Activated naive CD8-positive, alpha-beta T cell treated with anti-CD3 and anti-CD28 coated beads, Interleukin-2, amount 10 ng/mL, durations not matched to agents 7 days and 5 days (primary cell): ENCODE measurements at regions of chr6 and their contacts with region 1.

Region 1: DNA sequence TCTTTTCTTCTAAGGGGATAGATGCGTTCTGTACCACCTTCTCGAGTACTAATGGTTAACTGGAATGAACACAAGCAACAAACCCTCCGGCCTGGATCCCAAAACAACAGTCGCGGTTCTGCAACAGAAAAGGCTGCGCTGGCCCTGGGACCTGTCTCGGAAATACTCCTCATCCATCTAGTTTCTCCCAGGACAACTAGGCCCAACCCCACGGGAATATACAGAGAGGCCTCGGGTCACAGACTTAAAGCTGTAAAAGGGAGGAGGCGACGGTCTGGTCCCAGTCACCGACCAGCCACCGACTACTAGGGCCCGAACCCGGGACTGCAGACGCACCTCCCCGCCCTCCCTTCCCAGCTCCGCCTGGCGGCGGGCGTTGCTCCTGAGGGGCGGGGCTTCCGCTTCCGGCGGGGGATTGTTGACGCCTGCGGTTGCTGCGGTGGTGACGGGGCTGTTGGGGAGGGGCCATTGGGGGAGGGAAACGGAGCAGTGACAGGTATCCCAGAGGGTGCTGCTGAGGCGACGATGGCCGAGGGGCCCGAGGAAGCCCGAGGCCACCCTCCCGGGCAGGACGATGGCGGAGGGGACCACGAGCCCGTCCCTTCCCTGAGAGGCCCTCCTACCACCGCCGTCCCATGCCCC is at the start of gene FAM8A1:
- DNase-seq: peak; percentile 97
- ATAC-seq: peak; percentile 88
- H3K4me3 Mint-ChIP-seq: peak within 1 kb of the TSS; percentile 96
- H3K27ac Mint-ChIP-seq: peak within 1 kb of the TSS; percentile 95
- H3K4me1 Mint-ChIP-seq: peaks cover 24% of the 10 kb centered on the region
- H3K27me3 Mint-ChIP-seq: no peaks in the 10 kb centered on the region
- total RNA-seq, gene FAM8A1: 14.2 to 14.9 TPM

Region 2: DNA sequence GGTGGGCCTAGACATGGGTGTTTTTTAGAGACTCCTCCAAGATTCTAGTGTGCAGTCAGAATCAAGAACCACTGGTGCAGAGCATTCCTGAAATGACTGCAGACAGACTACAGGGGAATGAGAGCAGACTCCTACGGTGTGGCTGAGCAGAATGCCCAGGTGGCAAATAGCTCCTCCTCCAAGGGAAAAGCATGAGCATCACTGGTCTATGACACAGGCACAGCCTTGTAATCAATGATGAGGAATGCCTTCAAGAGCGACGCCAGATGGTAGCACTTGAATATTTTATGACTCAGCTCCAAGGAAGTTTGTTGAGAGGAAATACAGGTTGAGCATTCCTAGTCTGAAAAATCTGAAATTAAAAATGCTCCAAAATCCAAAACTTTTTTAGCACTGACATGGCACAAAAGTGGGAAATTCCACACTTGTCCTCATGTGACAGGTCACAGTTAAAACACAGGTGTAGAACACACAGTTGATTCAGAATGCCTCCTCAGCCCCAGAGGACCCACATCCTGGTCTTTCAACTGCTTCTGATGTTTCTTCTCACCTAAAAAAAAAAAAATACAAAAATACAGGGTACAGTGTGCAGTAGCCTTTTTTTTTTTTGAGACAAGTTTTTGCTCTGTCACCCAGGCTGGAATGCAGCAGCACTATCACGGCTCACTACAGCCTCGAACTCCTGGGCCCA is 10.5 kb before region 1 on chr6:
- POLR2A ChIA-PET with region 1: interaction called, 10 read pairs
- DNase-seq: no peak
- ATAC-seq: peak; percentile 88
- H3K4me3 Mint-ChIP-seq: no peak overlapping the region
- H3K27ac Mint-ChIP-seq: peak overlapping the region; percentile 32
- H3K4me1 Mint-ChIP-seq: peaks cover 19% of the 10 kb centered on the region
- H3K27me3 Mint-ChIP-seq: no peaks in the 10 kb centered on the region

Region 3: GRCh38 chr6:17665132-17665531 is 65.1 kb after region 1 on chr6:
- POLR2A ChIA-PET with region 1: no interaction called
- DNase-seq: no peak
- ATAC-seq: no peak
- H3K4me3 Mint-ChIP-seq: peak overlapping the region; percentile 51
- H3K27ac Mint-ChIP-seq: peak overlapping the region; percentile 78
- H3K4me1 Mint-ChIP-seq: peaks cover 31% of the 10 kb centered on the region
- H3K27me3 Mint-ChIP-seq: no peaks in the 10 kb centered on the region

Region 4: DNA sequence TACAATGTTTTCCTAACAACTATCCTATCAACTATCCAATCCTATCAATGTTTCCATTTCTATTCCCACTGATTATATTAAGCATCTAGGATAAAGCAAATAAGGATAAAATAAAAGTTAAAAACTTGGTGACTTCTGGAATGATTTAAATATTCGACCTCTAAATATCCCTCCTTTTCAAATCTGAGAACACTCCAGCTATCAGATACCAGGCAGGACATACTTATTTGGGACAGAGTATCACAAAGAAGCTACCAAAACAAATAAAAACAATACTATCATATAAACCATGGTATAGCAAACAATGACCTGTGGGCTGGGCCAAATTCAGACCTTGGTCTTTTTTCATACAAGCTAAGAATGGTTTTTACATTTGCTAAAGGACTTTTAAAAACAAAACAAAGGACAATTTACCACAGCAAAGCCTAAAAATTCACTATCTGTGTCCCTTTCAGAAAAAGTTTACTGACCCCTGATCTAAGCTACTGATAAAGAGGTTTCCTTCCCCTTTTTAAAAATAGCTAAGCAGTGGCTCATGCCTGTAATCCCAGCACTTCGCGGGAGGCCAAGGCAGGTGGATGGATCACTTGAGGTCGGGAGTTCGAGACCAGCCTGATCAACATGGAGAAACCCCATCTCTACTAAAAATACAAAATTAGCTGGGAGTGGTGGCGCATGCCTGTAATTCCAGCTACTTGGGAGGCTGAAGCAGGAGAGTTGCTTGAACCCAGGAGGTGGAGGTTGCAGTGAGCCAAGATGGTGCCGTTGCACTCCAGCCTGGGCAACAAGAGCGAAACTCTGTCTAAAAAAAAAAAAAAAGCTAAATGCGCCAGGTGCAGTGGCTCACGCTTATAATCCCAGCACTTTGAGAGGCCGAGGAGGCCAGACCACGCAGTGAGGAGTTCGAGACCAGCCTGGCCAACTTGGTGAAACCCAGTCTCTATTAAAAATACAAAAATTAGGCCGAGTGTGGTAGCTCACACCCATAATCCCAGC is 100.7 kb after region 1 on chr6:
- POLR2A ChIA-PET with region 1: interaction called, 39 read pairs
- DNase-seq: no peak
- ATAC-seq: no peak
- H3K4me3 Mint-ChIP-seq: no peak overlapping the region
- H3K27ac Mint-ChIP-seq: no peak overlapping the region
- H3K4me1 Mint-ChIP-seq: peaks cover 30% of the 10 kb centered on the region
- H3K27me3 Mint-ChIP-seq: no peaks in the 10 kb centered on the region

Region 5: GRCh38 chr6:17706580-17707370 is 106.8 kb after region 1 on chr6 and contains the start of gene NUP153:
- POLR2A ChIA-PET with region 1: interaction called, 39 read pairs
- DNase-seq: peak; percentile 100
- ATAC-seq: peak; percentile 75
- H3K4me3 Mint-ChIP-seq: peak within 1 kb of the TSS; percentile 93
- H3K27ac Mint-ChIP-seq: peak within 1 kb of the TSS; percentile 97
- H3K4me1 Mint-ChIP-seq: peaks cover 26% of the 10 kb centered on the region
- H3K27me3 Mint-ChIP-seq: no peaks in the 10 kb centered on the region
- total RNA-seq, gene NUP153: 67.6 to 68.5 TPM